HepG2 (cell line): ENCODE measurements at regions of chr13 and their contacts with region 1.

Region 1: DNA sequence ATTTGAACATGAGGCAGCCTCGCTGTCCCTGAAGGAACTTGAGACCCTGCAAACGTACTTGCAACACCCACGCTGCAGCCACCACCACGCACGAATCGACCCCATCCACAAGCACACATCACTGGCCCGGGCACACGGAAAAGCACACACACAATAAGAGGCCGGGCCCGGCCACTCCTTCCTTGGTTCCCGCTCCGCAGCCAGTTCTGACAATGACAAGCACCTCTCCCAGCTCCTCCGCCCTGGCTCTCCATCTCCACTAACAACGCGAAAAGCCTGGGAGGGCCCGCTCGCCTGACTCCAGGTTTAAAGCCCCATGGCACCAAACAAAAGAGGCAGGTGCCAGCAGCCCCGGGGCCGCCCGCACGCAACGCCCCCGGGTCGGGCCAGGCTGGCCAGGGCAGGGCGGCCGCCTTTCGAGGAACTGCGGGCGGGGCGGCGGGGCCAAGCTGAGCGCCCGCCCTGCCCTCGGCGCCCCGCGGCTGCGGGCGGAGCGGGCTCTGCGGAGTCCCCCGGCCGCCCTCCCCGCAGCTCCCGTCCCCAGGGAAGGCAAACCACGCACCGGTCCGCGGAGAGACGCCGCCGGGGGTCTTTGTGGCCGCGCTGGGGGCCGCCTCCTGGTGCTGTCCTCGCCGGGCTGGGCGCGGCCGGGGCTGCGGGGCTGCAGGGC is 495 bp downstream of the DCLK1 start:
- DNase-seq: no peak
- ATAC-seq: peak; percentile 54
- H3K4me3 ChIP-seq: no peak overlapping the region
- H3K27ac ChIP-seq: no peak overlapping the region
- H3K4me1 ChIP-seq: no peaks in the 10 kb centered on the region
- H3K27me3 ChIP-seq: peaks cover 2 to 25% of the 10 kb centered on the region in 2 experiments; a peak in 3 of 5 replicates
- CTCF ChIP-seq: no peak
- EP300 ChIP-seq: no peak
- POLR2A ChIP-seq: no peak
- RAD21 ChIP-seq: no peak

Region 2: DNA sequence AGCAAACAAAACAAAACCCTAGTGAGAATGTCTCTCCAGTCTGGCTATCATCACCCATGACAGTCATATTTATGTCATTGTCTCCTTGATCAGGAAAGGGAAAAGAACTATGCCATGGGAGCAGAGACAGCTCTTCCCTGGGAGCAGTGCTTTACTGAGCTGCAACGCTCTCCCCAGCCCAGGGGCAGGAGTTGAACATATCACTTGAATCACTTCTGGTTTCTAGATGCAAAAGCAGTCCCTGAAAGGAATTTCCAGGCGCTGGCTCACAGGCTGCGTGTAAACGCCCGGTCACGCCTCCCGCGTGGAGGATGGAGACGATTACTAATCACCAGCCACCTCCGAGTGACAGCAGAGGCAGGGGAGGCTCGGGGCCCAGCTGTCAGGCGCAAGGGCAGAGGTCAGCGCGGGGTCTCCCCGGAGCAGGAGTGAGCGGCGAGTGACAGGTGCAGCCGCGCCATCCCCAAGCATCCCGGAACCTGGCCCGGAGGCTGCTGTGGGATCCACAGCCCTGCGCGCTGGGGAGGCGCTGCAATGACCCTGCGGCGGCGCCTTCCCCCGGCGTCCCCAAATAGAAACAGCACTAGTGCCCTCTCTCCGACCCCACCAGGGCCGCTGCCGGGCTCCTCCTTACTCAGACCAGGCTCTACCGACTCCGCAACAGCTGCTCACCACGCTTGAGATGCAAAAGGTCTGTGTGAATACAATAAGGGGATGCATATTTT is 24.0 kb after region 1 on chr13:
- CTCF ChIA-PET with region 1: no interaction called
- POLR2A ChIA-PET with region 1: no interaction called
- in situ Hi-C with region 1: no loop called
- intact Hi-C with region 1: loop called (anchors 1 kb)
- DNase-seq: no peak
- ATAC-seq: no peak
- H3K4me3 ChIP-seq: no peak overlapping the region
- H3K27ac ChIP-seq: no peak overlapping the region
- H3K4me1 ChIP-seq: no peaks in the 10 kb centered on the region
- H3K27me3 ChIP-seq: no peaks in the 10 kb centered on the region
- CTCF ChIP-seq: no peak
- EP300 ChIP-seq: no peak
- POLR2A ChIP-seq: no peak
- RAD21 ChIP-seq: no peak